Tibial artery (tissue), 4 donors: ENCODE measurements at regions of chr19 and their contacts with region 1.

Region 1: GRCh38 chr19:11496391-11497163 is 9.1 kb downstream of the ZNF653 start:
- DNase-seq: peak; percentile 58 to 85
- H3K4me3 ChIP-seq: no peak overlapping the region
- H3K27ac ChIP-seq: no peak overlapping the region
- H3K4me1 ChIP-seq: no peaks in the 10 kb centered on the region
- H3K27me3 ChIP-seq: no peaks in the 10 kb centered on the region
- CTCF ChIP-seq: peak; percentile 61 to 67

Region 2: DNA sequence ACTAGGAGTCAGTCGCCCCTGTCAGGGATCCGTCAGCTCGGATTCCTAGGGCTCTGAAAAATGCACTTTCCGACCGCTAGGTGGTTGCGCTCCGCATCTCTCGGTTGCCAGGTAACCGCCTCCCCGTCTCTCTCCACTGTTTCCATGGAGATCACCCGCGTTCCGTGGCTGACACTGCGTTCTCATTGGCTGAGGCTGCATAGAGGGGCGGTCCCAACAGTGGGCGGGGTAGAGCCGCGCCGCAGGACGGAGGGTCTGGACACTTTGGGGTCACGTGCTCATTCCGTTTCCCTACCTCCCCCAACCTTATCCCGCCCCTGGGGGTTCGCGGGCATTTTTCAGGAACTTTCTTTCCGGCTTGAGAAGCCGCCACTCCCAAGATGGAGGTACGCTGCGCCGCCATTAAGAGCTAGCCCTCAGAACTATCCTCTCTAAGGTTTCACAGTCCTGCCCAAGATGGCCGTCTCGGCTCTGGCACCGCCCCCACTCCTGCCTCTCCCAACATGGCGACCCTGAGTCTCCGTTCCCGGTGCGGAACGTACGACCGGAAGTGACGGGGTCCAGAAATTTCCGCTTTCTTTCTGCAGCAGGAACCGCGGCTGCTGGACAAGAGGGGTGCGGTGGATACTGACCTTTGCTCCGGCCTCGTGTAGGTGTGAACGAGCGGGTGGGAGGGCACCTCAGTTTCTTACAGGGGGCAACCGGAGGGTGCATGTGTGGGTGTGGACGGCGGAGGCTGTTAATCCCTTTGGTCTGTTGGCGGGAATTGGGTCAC is 61.3 kb before region 1 on chr19 and contains the starts of genes ODAD3 and PRKCSH:
- intact Hi-C with region 1: no loop called
- DNase-seq: peak; percentile 99 to 100
- H3K4me3 ChIP-seq: peak within 1 kb of the TSS; percentile 64 to 88
- H3K27ac ChIP-seq: peak within 1 kb of the TSS; percentile 80 to 82
- H3K4me1 ChIP-seq: peaks cover 0 to 24% (median 18%) of the 10 kb centered on the region in 4 donors
- H3K27me3 ChIP-seq: no peaks in the 10 kb centered on the region
- CTCF ChIP-seq: peak; percentile 87 to 98

Region 3: GRCh38 chr19:11587302-11587974 is 90.9 kb after region 1 on chr19:
- intact Hi-C with region 1: loop called (anchors 2 kb)
- DNase-seq: peak; percentile 78 to 86
- H3K4me3 ChIP-seq: no peak overlapping the region
- H3K27ac ChIP-seq: no peak overlapping the region
- H3K4me1 ChIP-seq: no peaks in the 10 kb centered on the region
- H3K27me3 ChIP-seq: no peaks in the 10 kb centered on the region
- CTCF ChIP-seq: peak; percentile 87 to 93